Common myeloid progenitor, CD34-positive (primary cell): ENCODE measurements at regions of chr1 and their contacts with region 1.

Region 1: DNA sequence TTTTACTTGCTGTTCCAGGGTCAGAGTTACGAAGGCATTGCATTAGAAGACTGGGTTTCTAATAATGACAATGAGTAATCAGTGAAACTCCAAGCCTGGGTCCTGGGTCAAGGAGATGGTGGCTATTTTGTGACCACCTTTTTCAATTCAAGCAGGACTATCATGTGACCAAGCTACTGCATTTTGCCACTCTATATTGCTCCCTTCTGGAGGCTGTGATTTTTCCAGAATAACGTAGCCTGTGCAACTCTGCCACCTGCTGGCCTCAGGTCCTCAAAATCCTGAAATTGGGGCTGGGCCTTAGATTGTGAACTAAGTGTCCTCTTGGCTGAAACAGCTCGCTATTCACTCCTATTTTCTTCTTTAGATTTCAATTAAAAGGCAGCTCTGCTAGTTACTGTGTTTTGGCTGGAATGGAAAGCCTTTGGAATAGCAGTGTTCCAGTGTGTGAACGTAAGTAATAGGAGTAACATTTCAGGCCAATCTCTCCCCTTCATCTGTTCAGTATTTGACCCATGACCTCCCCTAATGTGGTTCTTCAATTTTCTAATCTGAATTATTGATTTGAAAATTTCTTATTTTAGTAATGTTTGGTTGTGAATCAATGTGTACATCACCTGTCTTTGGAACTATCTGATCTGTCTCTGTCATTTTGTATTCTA is 52.9 kb upstream of the CD46 start:
- DNase-seq: peak; percentile 56 to 60 (median 58)
- H3K4me3 ChIP-seq: no peak overlapping the region
- H3K27ac ChIP-seq: no peak overlapping the region
- H3K4me1 ChIP-seq: no peaks in the 10 kb centered on the region
- H3K27me3 ChIP-seq: no peaks in the 10 kb centered on the region

Region 2: GRCh38 chr1:206419250-206419649 is 1279.7 kb before region 1 on chr1:
- CTCF ChIA-PET with region 1: no interaction called
- POLR2A ChIA-PET with region 1: interaction called, 12 read pairs
- DNase-seq: no peak
- H3K4me3 ChIP-seq: no peak overlapping the region
- H3K27ac ChIP-seq: no peak overlapping the region
- H3K4me1 ChIP-seq: no peaks in the 10 kb centered on the region
- H3K27me3 ChIP-seq: no peaks in the 10 kb centered on the region

Region 3: DNA sequence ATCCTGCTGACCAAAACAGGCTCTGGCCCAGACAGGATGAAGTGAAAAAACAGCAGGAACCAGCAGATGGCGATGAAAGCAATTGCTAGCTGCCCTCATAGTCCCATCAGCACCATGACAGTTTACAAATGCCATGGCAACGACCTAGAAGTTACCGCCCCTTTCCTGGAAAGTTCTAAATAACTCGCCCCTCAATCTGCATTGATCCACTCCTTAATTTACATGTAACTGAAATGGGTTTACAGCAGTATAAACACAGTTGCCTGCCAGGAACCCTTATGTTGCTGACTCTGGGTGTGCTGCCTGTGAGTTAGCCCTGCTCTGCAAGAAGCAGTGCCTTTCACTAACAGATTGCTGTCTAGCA is 119.5 kb before region 1 on chr1:
- CTCF ChIA-PET with region 1: interaction called, 17 read pairs
- POLR2A ChIA-PET with region 1: no interaction called
- DNase-seq: peak; percentile 54 to 66 (median 63)
- H3K4me3 ChIP-seq: no peak overlapping the region
- H3K27ac ChIP-seq: no peak overlapping the region
- H3K4me1 ChIP-seq: no peaks in the 10 kb centered on the region
- H3K27me3 ChIP-seq: no peaks in the 10 kb centered on the region

Region 4: DNA sequence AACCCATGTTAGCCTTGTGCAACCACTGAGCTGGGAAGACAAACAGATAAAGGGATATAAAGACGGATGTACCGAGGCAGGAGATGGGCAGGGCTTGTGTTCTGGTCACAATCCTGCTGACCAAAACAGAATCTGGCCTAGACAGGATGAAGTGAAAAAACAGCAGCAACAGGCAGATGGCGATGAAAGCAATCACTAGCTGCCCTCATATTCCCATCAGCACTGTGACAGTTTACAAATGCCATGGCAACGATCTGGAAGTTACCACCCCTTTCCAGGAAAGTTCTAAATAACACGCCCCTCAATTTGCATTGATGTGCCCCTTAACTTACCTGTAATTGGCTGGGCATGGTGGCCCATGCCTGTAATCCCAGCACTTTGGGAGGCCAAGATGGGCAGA is 12.3 kb after region 1 on chr1:
- CTCF ChIA-PET with region 1: interaction called, 13 read pairs
- POLR2A ChIA-PET with region 1: no interaction called
- DNase-seq: peak in 2 of 3 donors; percentile 7 to 12
- H3K4me3 ChIP-seq: no peak overlapping the region
- H3K27ac ChIP-seq: no peak overlapping the region
- H3K4me1 ChIP-seq: no peaks in the 10 kb centered on the region
- H3K27me3 ChIP-seq: no peaks in the 10 kb centered on the region